Cardiac septum (tissue), 1 donor: ENCODE measurements at regions of chr15 and their contacts with region 1.

Region 1: DNA sequence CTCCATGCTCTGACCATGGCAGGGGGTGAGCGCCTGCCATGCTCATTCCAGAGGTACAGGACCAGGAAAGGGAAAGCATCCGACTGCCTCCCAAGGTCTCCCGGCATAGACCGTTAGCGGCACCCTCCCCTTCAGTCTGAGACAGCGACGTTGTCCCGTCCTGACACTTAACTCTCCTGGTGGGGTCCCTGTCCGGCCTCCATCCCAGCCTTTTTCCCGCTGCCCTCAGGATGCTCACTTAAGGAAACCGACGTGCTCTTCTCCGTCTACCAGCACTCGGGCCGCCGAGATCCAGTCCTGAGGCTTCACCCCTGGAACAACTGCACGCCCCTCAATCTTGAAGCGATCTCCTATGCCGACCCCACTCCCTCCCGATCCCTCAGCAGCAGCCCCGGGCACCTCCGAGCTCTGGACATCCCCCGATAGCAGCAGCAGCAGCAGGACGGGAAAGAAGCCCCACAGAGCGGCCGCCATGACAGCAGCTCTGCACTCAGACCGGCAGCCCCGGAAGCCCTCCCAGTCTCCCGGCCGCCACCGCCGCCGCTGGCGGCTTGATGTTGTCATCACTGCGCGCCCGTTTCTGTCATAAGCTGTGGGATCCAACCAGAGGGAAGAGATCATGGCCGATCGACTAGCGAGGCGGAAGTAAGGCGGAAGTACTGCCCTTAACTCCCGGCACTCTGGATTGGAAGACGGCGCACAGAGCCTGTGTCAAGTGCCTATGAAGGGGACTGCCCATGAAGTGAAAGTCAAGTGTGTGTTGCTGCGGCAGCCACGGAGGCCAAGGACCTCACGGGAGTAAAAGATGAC is at the starts of genes EMC7 and PGBD4:
- DNase-seq: peak; percentile 99
- total RNA-seq, gene EMC7: 55.6 TPM
- total RNA-seq, gene PGBD4: 1.5 TPM

Region 2: GRCh38 chr15:34038023-34038870 is 63.3 kb before region 1 on chr15:
- intact Hi-C with region 1: loop called (anchors 2 kb)
- DNase-seq: peak; percentile 89

Region 3: GRCh38 chr15:34209421-34210282 is 108.1 kb after region 1 on chr15 and contains the start of gene KATNBL1:
- intact Hi-C with region 1: loop called (anchors 5 kb)
- DNase-seq: peak; percentile 98
- total RNA-seq, gene KATNBL1: 23.3 TPM

Region 4: GRCh38 chr15:34223904-34224596 is 122.5 kb after region 1 on chr15:
- intact Hi-C with region 1: loop called (anchors 1 kb)
- DNase-seq: no peak

Region 5: DNA sequence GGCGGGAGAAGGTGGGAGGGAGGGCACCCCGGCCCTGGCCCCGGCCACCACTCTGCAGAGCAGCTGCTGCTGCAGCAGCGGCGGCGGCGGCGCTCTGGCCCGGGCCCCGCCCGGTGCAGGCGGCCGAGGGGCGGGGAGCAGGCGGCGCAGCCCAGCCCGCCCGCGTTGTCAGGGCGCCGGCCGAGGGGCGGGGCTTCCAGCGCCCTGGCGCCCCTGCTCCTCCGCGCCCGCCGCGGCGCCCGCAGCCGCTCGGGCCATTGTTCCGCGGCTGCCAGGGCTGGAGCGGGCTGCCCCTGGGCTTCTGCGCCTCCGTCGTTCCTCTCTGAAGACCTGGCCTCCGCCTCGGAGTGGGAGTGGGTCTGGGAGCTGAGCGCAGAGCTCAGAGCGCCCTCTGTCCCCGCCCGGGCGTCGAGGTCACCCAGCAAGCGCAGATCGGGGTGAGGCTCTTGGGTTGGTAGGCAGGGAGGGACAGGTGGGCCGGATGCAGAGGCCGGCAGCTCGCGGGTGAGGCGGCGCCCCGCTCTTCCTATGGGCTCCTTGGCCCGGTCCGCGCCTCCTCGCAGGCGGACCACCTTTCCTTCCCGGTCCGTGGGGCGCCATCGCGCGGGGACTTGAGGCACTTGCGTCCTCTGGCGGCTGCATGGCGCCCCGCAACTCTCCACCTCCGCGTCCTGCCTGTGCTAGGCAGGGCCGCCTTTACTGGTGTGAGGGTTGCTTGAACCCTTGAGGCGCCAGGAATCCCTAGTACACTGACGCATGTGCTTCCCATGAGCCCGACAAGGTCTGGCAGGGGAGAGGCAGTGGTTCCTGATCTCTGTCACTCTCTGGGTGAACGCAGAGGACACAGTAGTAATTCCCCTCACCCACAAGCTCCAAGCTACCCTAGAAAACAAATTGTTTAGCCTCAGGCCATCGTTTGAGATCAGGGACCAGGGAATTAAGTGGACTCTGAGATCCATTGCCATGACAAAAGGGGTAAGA is 265.8 kb after region 1 on chr15 and contains the start of gene LPCAT4:
- intact Hi-C with region 1: loop called (anchors 5 kb)
- DNase-seq: peak; percentile 94
- total RNA-seq, gene LPCAT4: 34.3 TPM